GM12878 (cell line): ENCODE measurements at regions of chr11 and their contacts with region 1.

Region 1: DNA sequence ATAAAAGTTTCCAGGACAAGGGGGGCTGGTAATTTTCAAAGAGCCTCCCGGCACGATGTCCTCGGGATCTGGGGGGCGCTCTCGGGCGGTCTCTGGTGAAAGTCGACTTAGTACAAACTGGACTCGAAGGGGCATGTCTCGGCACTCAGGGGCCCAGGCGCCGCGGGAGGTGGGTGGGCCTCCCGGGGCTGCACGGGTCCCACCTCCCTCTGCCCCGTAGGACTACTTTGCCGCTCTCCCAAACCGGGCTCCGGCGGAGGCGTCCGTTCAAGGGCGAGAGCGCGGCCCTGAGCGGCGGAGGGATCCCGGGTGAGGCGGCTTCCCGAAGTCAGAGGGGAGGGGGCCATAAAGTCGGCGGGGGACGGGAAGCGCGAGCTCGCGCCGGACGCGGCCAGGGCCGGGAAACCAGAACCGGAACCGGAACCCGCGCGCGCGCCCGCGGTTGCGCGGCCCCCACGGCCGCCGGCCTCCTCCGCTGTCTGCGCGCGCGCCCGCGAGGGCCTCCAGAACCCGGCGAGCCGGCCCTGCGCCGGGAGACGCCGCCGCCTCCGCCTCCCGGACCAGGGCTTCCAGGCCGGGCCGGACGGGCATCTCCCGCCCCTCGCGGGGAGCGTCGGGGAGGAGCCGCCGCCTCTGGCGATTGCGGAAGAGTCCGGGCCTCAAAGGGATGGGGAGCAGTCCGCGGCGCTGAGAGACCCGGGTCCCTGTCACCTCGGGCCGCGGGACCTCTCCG is at the start of gene ARHGEF12:
- DNase-seq: peak; percentile 33
- ATAC-seq: peak; percentile 64
- H3K4me3 ChIP-seq: peak within 1 kb of the TSS; percentile 94
- H3K27ac ChIP-seq: peak within 1 kb of the TSS; percentile 74
- H3K4me1 ChIP-seq: peaks cover 9% of the 10 kb centered on the region
- H3K27me3 ChIP-seq: no peaks in the 10 kb centered on the region
- CTCF ChIP-seq: peak; percentile 40 to 48 (median 44)
- EP300 ChIP-seq: peak in 1 of 2 experiments; percentile 43; a peak in 1 of 4 replicates
- POLR2A ChIP-seq: peak; percentile 67
- RAD21 ChIP-seq: peak; percentile 23; the same call in 1 of the 2 replicates
- polyA plus RNA-seq, gene ARHGEF12: 2.7 to 3.6 TPM

Region 2: GRCh38 chr11:120391292-120391691 is 55.2 kb after region 1 on chr11:
- CTCF ChIA-PET with region 1: interaction called, 9 read pairs
- POLR2A ChIA-PET with region 1: interaction called, 3 read pairs
- RAD21 ChIA-PET with region 1: interaction called, 10 read pairs
- SMC1A ChIA-PET with region 1: interaction called, 12 read pairs
- in situ Hi-C with region 1: no loop called
- intact Hi-C with region 1: no loop called
- DNase-seq: no peak
- ATAC-seq: peak; percentile 52
- H3K4me3 ChIP-seq: no peak overlapping the region
- H3K27ac ChIP-seq: no peak overlapping the region
- H3K4me1 ChIP-seq: no peaks in the 10 kb centered on the region; the same call in 1 of the 2 replicates
- H3K27me3 ChIP-seq: no peaks in the 10 kb centered on the region
- CTCF ChIP-seq: no peak
- EP300 ChIP-seq: no peak
- POLR2A ChIP-seq: no peak
- RAD21 ChIP-seq: no peak

Region 3: GRCh38 chr11:120432056-120433018 is 96.3 kb after region 1 on chr11:
- CTCF ChIA-PET with region 1: interaction called, 11 read pairs
- POLR2A ChIA-PET with region 1: interaction called, 5 read pairs
- RAD21 ChIA-PET with region 1: interaction called, 4 read pairs
- SMC1A ChIA-PET with region 1: interaction called, 11 read pairs
- in situ Hi-C with region 1: no loop called
- intact Hi-C with region 1: loop called (anchors 5 kb)
- DNase-seq: peak; percentile 33
- ATAC-seq: peak; percentile 88
- H3K4me3 ChIP-seq: no peak overlapping the region
- H3K27ac ChIP-seq: 0 out of 2 replicates have a peak overlapping the region, but pooled peaks have one; percentile 1
- H3K4me1 ChIP-seq: no peaks in the 10 kb centered on the region
- H3K27me3 ChIP-seq: no peaks in the 10 kb centered on the region
- CTCF ChIP-seq: no peak
- EP300 ChIP-seq: no peak
- POLR2A ChIP-seq: no peak
- RAD21 ChIP-seq: no peak

Region 4: GRCh38 chr11:120500414-120501071 is 164.5 kb after region 1 on chr11:
- CTCF ChIA-PET with region 1: interaction called, 40 read pairs
- POLR2A ChIA-PET with region 1: no interaction called
- RAD21 ChIA-PET with region 1: interaction called, 4 read pairs
- SMC1A ChIA-PET with region 1: interaction called, 20 read pairs
- in situ Hi-C with region 1: no loop called
- intact Hi-C with region 1: loop called (anchors 5 kb)
- DNase-seq: no peak
- ATAC-seq: peak; percentile 61
- H3K4me3 ChIP-seq: no peak overlapping the region
- H3K27ac ChIP-seq: peak overlapping the region; percentile 24; the same call in 1 of the 2 replicates
- H3K4me1 ChIP-seq: peaks cover 20% of the 10 kb centered on the region
- H3K27me3 ChIP-seq: no peaks in the 10 kb centered on the region; a peak in 1 of 4 replicates
- CTCF ChIP-seq: no peak
- EP300 ChIP-seq: no peak
- POLR2A ChIP-seq: no peak
- RAD21 ChIP-seq: no peak

Region 5: GRCh38 chr11:120612513-120613263 is 276.6 kb after region 1 on chr11:
- CTCF ChIA-PET with region 1: interaction called, 5 read pairs
- POLR2A ChIA-PET with region 1: no interaction called
- RAD21 ChIA-PET with region 1: interaction called, 3 read pairs
- SMC1A ChIA-PET with region 1: interaction called, 3 read pairs
- in situ Hi-C with region 1: no loop called
- intact Hi-C with region 1: loop called (anchors 2 kb)
- DNase-seq: peak; percentile 94
- ATAC-seq: peak; percentile 91
- H3K4me3 ChIP-seq: no peak overlapping the region; the same call in 1 of the 2 replicates
- H3K27ac ChIP-seq: peak overlapping the region; percentile 75
- H3K4me1 ChIP-seq: peaks cover 32% of the 10 kb centered on the region
- H3K27me3 ChIP-seq: no peaks in the 10 kb centered on the region
- CTCF ChIP-seq: peak in 1 of 3 experiments; percentile 19; a peak in 1 of 6 replicates
- EP300 ChIP-seq: peak; percentile 76 to 89; a peak in 3 of 4 replicates
- POLR2A ChIP-seq: no peak; the same call in 1 of the 2 replicates
- RAD21 ChIP-seq: no peak

Region 6: GRCh38 chr11:121194731-121195596 is 858.9 kb after region 1 on chr11:
- CTCF ChIA-PET with region 1: interaction called, 7 read pairs
- POLR2A ChIA-PET with region 1: no interaction called
- RAD21 ChIA-PET with region 1: no interaction called
- SMC1A ChIA-PET with region 1: no interaction called
- in situ Hi-C with region 1: no loop called
- intact Hi-C with region 1: loop called (anchors 10 kb)
- DNase-seq: peak; percentile 31
- ATAC-seq: peak; percentile 99
- H3K4me3 ChIP-seq: no peak overlapping the region
- H3K27ac ChIP-seq: no peak overlapping the region
- H3K4me1 ChIP-seq: no peaks in the 10 kb centered on the region
- H3K27me3 ChIP-seq: no peaks in the 10 kb centered on the region
- CTCF ChIP-seq: peak; percentile 72 to 84 (median 83)
- EP300 ChIP-seq: no peak
- POLR2A ChIP-seq: no peak
- RAD21 ChIP-seq: peak; percentile 86